ENCODE measurements at regions of chr6 and their contacts with region 1.

Region 1: DNA sequence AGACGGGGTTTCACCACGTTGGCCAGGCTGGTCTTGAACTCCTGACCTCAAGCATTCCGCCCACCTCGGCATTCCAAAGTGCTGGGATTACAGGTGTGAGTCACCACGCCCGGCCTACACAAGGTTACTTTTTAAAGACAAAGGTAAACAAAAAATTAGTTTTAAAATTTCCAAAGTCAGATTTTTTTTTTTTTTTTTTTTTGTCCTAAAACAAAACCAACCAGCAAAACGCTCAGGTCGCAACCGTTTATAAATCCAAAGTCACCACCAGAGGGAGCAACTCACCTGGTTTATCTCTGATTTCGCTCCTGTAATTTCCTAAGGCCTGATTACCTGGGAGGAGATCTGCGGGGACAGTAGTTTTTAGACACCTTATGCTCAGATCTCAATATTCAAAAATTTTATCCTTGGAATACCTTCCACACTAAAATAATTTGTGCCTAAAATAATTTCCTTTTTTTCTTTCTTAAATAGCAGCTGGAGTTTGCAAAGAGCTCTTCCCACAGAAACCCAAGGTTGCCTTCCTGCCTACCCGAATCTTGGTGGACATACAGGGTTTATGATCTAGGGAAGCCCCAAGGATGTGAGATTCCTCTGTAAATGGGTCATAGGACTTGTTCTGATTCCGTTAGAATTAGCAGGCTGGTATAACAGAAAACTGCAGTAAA is 19.8 kb upstream of the TREM1 start:
- DNase-seq: no peak
- H3K4me3 ChIP-seq: no peak overlapping the region
- CTCF ChIP-seq: peak; percentile 42

Region 2: DNA sequence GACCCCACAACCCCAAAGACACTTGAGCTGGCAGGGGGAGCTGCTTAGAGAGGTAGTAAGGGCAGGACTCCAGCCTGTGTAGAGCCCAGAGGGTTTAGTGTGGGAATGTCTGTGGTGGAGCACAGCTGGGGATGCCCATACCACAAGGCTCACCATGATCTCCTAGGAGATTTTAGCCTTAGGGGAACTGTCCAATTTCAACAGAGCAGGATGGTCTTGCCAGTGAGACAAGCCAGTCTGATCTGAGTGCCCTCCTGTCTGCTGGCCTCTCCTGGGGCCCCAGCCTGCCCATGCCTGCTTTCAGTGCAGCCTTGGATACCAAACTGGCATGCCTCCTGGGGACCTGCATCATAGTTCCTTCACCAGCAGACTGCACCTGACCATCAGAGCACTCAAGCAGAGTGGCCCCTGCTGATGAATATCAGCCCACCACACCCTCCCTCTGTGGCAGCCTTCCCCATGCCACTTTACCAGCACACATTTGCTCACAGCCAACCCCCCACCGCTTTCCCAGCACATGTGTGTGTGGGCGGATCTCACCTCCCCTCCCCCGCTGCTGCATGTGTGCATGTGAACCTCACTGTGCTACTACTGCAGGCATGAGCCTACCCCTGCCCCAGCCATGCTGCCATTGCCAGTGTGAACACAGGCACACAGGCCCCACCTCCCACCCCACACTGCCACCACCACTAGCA is 12.0 kb before region 1 on chr6:
- CTCF ChIA-PET with region 1: interaction called, 12 read pairs
- POLR2A ChIA-PET with region 1: no interaction called
- DNase-seq: no peak
- H3K4me3 ChIP-seq: no peak overlapping the region
- CTCF ChIP-seq: no peak

Region 3: DNA sequence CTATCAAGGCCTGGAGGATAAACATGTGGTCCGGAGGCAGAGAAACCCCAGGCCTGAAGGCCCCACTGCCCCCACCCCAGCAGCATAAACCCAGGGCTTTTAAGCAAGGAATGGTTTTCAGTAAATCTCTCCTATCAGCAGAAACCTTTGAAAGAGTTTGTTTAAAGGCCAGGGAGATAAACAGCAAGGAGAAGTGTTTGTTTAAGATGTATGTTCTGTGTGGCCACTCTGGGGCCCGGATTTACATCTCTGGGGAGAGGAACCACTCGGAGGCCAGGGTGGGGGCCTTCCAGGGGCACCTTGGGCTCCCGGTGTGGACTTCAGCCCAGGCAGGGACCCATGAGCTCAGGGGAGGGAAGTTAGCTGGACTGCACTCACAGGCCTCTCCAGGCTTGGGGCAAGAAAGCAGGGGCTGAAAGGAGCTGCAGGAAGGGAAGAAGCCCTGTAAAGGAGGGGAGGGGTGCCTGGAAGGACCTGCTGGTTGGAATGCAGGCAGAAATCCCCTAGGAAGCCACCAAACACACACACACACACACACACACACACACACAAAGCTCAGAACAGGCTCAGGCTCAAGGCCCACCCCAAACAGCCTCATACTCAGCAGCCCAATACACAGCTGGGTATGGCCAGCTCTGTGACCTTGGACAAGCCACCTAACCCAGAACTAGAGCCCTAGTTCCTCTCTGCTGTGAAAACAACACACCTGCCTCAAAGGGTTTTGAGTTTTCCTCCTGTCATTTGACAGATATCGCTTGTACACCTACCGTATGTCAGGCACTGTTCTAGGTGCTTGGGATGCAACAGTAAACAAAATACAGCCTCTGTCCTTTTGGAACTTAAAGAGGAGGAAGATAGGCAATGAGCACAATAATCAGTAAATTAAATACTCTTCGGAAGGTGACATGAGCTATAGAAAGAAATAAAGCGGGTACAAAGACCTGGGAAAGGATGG is 213.7 kb after region 1 on chr6:
- CTCF ChIA-PET with region 1: no interaction called
- POLR2A ChIA-PET with region 1: no interaction called
- DNase-seq: no peak
- H3K4me3 ChIP-seq: no peak overlapping the region
- CTCF ChIP-seq: no peak